MCF 10A (cell line): ENCODE measurements at regions of chr5 and their contacts with region 1.

Region 1: DNA sequence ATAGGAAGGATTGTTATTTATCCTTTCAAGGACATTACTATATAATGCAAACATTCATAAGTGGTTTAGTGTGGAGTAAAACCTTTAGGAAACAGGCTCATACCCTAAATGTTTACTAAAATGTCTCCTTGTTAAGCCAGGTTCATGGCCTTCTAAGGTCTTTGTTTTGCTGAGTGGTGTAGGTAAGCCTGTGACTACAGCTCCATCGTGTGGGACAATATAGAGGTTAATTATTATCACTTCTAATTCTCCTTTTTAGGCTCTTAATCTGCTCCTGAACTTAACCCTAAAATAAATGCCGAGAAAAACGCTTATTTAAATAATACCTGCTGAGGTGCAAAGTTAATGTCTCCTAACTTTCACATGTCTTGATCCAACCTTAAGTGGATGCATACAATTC is 43.8 kb downstream of the SPINK5 start:
- DNase-seq: peak; percentile 65
- H3K4me3 Mint-ChIP-seq: no peak overlapping the region
- H3K27ac Mint-ChIP-seq: no peak overlapping the region
- H3K4me1 Mint-ChIP-seq: no peaks in the 10 kb centered on the region
- H3K27me3 Mint-ChIP-seq: no peaks in the 10 kb centered on the region
- CTCF ChIP-seq: peak; percentile 55

Region 2: GRCh38 chr5:147857302-147858129 is 250.1 kb before region 1 on chr5:
- CTCF ChIA-PET with region 1: interaction called, 19 read pairs
- POLR2A ChIA-PET with region 1: no interaction called
- intact Hi-C with region 1: loop called (anchors 5 kb)
- DNase-seq: peak; percentile 80
- H3K4me3 Mint-ChIP-seq: no peak overlapping the region
- H3K27ac Mint-ChIP-seq: no peak overlapping the region
- H3K4me1 Mint-ChIP-seq: no peaks in the 10 kb centered on the region
- H3K27me3 Mint-ChIP-seq: no peaks in the 10 kb centered on the region
- CTCF ChIP-seq: peak; percentile 76

Region 3: GRCh38 chr5:147949711-147950573 is 157.7 kb before region 1 on chr5:
- CTCF ChIA-PET with region 1: interaction called, 110 read pairs
- POLR2A ChIA-PET with region 1: interaction called, 7 read pairs
- intact Hi-C with region 1: loop called (anchors 1 kb)
- DNase-seq: peak; percentile 73
- H3K4me3 Mint-ChIP-seq: no peak overlapping the region
- H3K27ac Mint-ChIP-seq: peak overlapping the region; percentile 54
- H3K4me1 Mint-ChIP-seq: peaks cover 5% of the 10 kb centered on the region
- H3K27me3 Mint-ChIP-seq: no peaks in the 10 kb centered on the region
- CTCF ChIP-seq: peak; percentile 86

Region 4: GRCh38 chr5:147963948-147964693 is 143.5 kb before region 1 on chr5:
- CTCF ChIA-PET with region 1: interaction called, 11 read pairs
- POLR2A ChIA-PET with region 1: no interaction called
- intact Hi-C with region 1: no loop called
- DNase-seq: peak; percentile 33
- H3K4me3 Mint-ChIP-seq: no peak overlapping the region
- H3K27ac Mint-ChIP-seq: no peak overlapping the region
- H3K4me1 Mint-ChIP-seq: peaks cover 6% of the 10 kb centered on the region
- H3K27me3 Mint-ChIP-seq: no peaks in the 10 kb centered on the region
- CTCF ChIP-seq: no peak

Region 5: GRCh38 chr5:148416921-148417320 is 309.3 kb after region 1 on chr5:
- CTCF ChIA-PET with region 1: no interaction called
- POLR2A ChIA-PET with region 1: no interaction called
- intact Hi-C with region 1: no loop called
- DNase-seq: peak; percentile 91
- H3K4me3 Mint-ChIP-seq: no peak overlapping the region
- H3K27ac Mint-ChIP-seq: peak overlapping the region; percentile 53
- H3K4me1 Mint-ChIP-seq: no peaks in the 10 kb centered on the region
- H3K27me3 Mint-ChIP-seq: no peaks in the 10 kb centered on the region
- CTCF ChIP-seq: no peak